Activated B cell treated with CpG ODN at 0.5 μM for 24 hours (primary cell): ENCODE measurements at regions of chr1 and their contacts with region 1.

Region 1: DNA sequence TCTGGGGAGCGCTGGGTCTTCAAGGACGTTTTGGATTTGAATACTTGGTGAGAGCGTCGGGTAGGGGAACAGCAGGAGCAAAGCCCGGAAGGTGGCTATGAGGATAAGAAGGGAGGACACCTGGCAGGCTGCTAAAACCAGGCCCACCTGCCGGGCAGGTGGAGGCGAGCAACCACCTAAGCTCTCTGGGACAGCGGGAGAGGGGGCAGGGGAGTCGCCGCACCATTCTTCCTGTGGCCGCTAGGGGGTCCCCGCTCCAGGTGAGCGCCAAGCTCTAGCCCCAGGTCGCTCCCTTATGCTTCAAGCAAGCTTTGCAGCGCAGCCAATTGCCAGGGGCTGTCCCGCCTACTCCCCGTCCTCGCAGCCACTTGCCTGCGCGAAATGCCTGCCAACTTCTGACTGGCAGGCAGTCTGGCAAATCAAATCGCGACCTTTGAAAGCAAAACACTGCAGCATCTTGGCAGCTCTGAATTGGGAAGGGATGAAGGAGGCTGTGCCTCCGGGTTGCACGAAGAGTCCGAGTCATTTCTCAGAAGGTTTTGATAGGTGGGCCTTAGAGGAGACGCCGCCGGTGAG is at the start of gene NIPAL3:
- DNase-seq: peak; percentile 86
- ATAC-seq: peak; percentile 92
- H3K4me3 Mint-ChIP-seq: peak within 1 kb of the TSS; percentile 98
- H3K27ac Mint-ChIP-seq: peak within 1 kb of the TSS; percentile 80
- H3K4me1 Mint-ChIP-seq: peaks cover 53% of the 10 kb centered on the region
- H3K27me3 Mint-ChIP-seq: no peaks in the 10 kb centered on the region
- CTCF ChIP-seq: peak; percentile 85
- total RNA-seq, gene NIPAL3: 21.0 and 23.2 TPM in 2 replicates

Region 2: GRCh38 chr1:24186993-24187805 is 228.2 kb before region 1 on chr1 and contains the start of gene IFNLR1:
- CTCF ChIA-PET with region 1: interaction called, 3 read pairs
- POLR2A ChIA-PET with region 1: interaction called, 17 read pairs
- intact Hi-C with region 1: loop called (anchors 1 kb)
- DNase-seq: peak; percentile 73
- ATAC-seq: peak; percentile 56
- H3K4me3 Mint-ChIP-seq: peak within 1 kb of the TSS; percentile 92
- H3K27ac Mint-ChIP-seq: peak within 1 kb of the TSS; percentile 98
- H3K4me1 Mint-ChIP-seq: peaks cover 82% of the 10 kb centered on the region
- H3K27me3 Mint-ChIP-seq: no peaks in the 10 kb centered on the region
- CTCF ChIP-seq: no peak
- total RNA-seq, gene IFNLR1: 38.6 and 39.2 TPM in 2 replicates

Region 3: GRCh38 chr1:24294757-24295371 is 120.6 kb before region 1 on chr1:
- CTCF ChIA-PET with region 1: no interaction called
- POLR2A ChIA-PET with region 1: no interaction called
- intact Hi-C with region 1: no loop called
- DNase-seq: no peak
- ATAC-seq: no peak
- H3K4me3 Mint-ChIP-seq: no peak overlapping the region
- H3K27ac Mint-ChIP-seq: no peak overlapping the region
- H3K4me1 Mint-ChIP-seq: no peaks in the 10 kb centered on the region
- H3K27me3 Mint-ChIP-seq: peaks cover 10% of the 10 kb centered on the region
- CTCF ChIP-seq: no peak

Region 4: GRCh38 chr1:24391882-24392603 is 23.4 kb before region 1 on chr1:
- CTCF ChIA-PET with region 1: interaction called, 70 read pairs
- POLR2A ChIA-PET with region 1: interaction called, 7 read pairs
- intact Hi-C with region 1: loop called (anchors 1 kb)
- DNase-seq: peak; percentile 56
- ATAC-seq: peak; percentile 77
- H3K4me3 Mint-ChIP-seq: peak overlapping the region; percentile 82
- H3K27ac Mint-ChIP-seq: peak overlapping the region; percentile 96
- H3K4me1 Mint-ChIP-seq: peaks cover 43% of the 10 kb centered on the region
- H3K27me3 Mint-ChIP-seq: no peaks in the 10 kb centered on the region
- CTCF ChIP-seq: no peak

Region 5: DNA sequence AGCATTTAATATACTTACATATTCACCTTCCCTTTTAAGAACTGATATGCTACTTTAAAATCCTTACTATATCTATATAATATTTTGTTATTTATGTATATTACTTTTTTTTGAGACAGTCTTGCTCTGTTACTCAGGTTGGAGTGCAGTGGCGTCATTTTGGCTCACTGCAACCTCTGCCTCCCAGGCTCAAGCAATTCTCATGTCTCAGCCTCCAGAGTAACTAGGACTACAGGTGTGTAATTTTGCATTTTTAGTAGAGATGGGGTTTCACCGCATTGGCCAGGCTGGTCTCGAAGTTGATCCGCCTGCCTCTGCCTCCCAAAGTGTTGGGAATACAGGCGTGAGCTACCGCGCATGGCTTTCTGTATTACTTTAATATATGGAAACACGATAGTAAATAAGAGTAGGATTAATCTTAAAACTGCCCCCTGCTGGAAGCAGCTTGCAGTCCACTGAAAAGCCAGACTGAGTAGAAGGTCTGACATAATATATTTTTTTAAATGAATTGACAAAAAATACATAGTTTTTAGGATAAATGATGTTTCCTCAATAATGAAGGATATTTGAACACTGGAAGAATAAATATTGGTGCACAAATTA is 111.6 kb after region 1 on chr1:
- CTCF ChIA-PET with region 1: interaction called, 25 read pairs
- POLR2A ChIA-PET with region 1: interaction called, 4 read pairs
- intact Hi-C with region 1: loop called (anchors 1 kb)
- DNase-seq: no peak
- ATAC-seq: no peak
- H3K4me3 Mint-ChIP-seq: no peak overlapping the region
- H3K27ac Mint-ChIP-seq: no peak overlapping the region
- H3K4me1 Mint-ChIP-seq: peaks cover 4% of the 10 kb centered on the region
- H3K27me3 Mint-ChIP-seq: no peaks in the 10 kb centered on the region
- CTCF ChIP-seq: no peak

Region 6: GRCh38 chr1:24635195-24635843 is 219.9 kb after region 1 on chr1:
- CTCF ChIA-PET with region 1: interaction called, 7 read pairs
- POLR2A ChIA-PET with region 1: no interaction called
- intact Hi-C with region 1: loop called (anchors 1 kb)
- DNase-seq: no peak
- ATAC-seq: peak; percentile 69
- H3K4me3 Mint-ChIP-seq: no peak overlapping the region
- H3K27ac Mint-ChIP-seq: no peak overlapping the region
- H3K4me1 Mint-ChIP-seq: peaks cover 2% of the 10 kb centered on the region
- H3K27me3 Mint-ChIP-seq: peaks cover 2% of the 10 kb centered on the region
- CTCF ChIP-seq: no peak

Region 7: GRCh38 chr1:25217598-25218232 is 802.3 kb after region 1 on chr1:
- CTCF ChIA-PET with region 1: no interaction called
- POLR2A ChIA-PET with region 1: interaction called, 11 read pairs
- intact Hi-C with region 1: no loop called
- DNase-seq: no peak
- ATAC-seq: no peak
- H3K4me3 Mint-ChIP-seq: no peak overlapping the region
- H3K27ac Mint-ChIP-seq: no peak overlapping the region
- H3K4me1 Mint-ChIP-seq: peaks cover 12% of the 10 kb centered on the region
- H3K27me3 Mint-ChIP-seq: no peaks in the 10 kb centered on the region
- CTCF ChIP-seq: no peak